Activated T-helper 1 cell treated with anti-CD3 and anti-CD28 coated beads, Interleukin-12 subunit alpha, Interleukin-12 subunit beta, Interleukin-2, Interleukin-4 antibody, amounts not matched to agents 30 ng/mL and 10 ng/mL and 1 ng/mL, durations not matched to agents 14 hours and 24 hours and 36 hours (primary cell): ENCODE measurements at regions of chr17 and their contacts with region 1.

Region 1: GRCh38 chr17:30173649-30174048 is 57.0 kb downstream of the NSRP1 start:
- DNase-seq: no peak
- H3K4me3 Mint-ChIP-seq: no peak overlapping the region
- H3K27ac Mint-ChIP-seq: no peak overlapping the region
- H3K4me1 Mint-ChIP-seq: peaks cover 23% of the 10 kb centered on the region
- H3K27me3 Mint-ChIP-seq: no peaks in the 10 kb centered on the region

Region 2: DNA sequence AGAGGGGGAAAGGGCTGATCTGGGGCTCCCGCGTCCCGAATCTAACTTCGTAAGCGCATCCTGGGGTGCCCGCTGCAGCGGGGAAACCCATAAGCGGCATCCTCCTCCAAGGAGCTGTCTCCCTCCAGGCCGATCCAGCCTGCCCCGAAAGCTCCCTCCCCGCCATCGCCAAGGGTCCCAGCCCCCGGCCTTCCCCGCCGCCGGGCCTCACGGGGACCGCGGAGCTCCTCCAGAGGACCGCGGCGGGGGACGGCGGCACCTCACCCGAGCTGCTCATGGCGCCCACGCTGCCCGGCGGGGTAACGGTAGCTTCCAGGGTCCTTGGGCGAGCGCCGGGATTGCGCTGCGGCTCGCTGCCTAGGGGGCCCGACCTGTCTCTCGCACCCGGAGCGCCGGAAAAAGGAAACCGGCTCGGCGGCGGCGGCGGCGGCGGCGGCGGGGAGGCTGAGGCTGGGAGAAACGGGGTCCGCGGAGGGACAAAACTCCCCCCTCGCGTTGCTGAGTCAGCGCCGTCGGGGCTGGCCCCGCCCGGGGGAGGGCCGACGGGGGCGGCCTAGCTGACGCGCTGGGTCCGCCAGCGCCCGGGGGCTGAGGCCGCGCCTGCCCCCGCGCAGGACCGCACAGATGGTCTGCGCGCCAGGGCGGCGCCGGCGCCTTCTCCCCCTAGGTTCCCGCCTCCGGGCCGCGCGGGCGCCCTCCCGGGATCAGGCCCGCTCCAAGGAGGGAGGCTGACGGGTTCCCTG is 118.1 kb after region 1 on chr17 and contains the start of gene BLMH:
- intact Hi-C with region 1: loop called (anchors 5 kb)
- DNase-seq: peak; percentile 80
- H3K4me3 Mint-ChIP-seq: peak within 1 kb of the TSS; percentile 97
- H3K27ac Mint-ChIP-seq: peak within 1 kb of the TSS; percentile 90
- H3K4me1 Mint-ChIP-seq: peaks cover 13% of the 10 kb centered on the region
- H3K27me3 Mint-ChIP-seq: no peaks in the 10 kb centered on the region
- total RNA-seq, gene BLMH: 64.8 and 64.9 TPM in 2 replicates

Region 3: DNA sequence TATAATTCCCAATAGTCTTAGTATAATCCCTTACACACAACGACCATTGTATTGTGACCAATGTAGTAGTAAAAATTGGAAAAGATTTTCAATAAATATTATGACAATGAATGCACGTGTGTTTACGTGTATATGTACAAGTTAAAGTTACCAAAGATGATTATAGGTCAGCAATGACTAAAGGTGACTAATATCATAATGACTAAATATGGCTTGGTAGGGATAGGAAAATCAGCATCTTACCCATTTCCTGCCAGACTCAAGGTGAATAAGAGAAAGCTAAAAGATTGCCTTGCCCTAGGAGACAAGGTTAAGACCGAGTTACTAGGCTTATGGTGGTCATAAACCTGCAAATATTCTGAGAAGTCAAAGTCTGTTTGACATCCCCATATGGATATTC is 239.5 kb after region 1 on chr17:
- intact Hi-C with region 1: loop called (anchors 5 kb)
- DNase-seq: no peak
- H3K4me3 Mint-ChIP-seq: no peak overlapping the region
- H3K27ac Mint-ChIP-seq: peak overlapping the region; percentile 41
- H3K4me1 Mint-ChIP-seq: peaks cover 34% of the 10 kb centered on the region
- H3K27me3 Mint-ChIP-seq: no peaks in the 10 kb centered on the region